ENCODE measurements at regions of chrX and their contacts with region 1.

Region 1: GRCh38 chrX:129606918-129607317 is 47.8 kb downstream of the APLN start:
- H3K4me3 ChIP-seq: no peak overlapping the region
- H3K27ac ChIP-seq: no peak overlapping the region
- H3K4me1 ChIP-seq: no peaks in the 10 kb centered on the region
- CTCF ChIP-seq: peak; percentile 76

Region 2: GRCh38 chrX:129637217-129638109 is 30.5 kb after region 1 on chrX:
- CTCF ChIA-PET with region 1: interaction called, 32 read pairs
- POLR2A ChIA-PET with region 1: no interaction called
- H3K4me3 ChIP-seq: no peak overlapping the region
- H3K27ac ChIP-seq: no peak overlapping the region
- H3K4me1 ChIP-seq: no peaks in the 10 kb centered on the region
- CTCF ChIP-seq: peak; percentile 71

Region 3: GRCh38 chrX:129701624-129702069 is 94.7 kb after region 1 on chrX:
- CTCF ChIA-PET with region 1: interaction called, 13 read pairs
- POLR2A ChIA-PET with region 1: no interaction called
- H3K4me3 ChIP-seq: no peak overlapping the region
- H3K27ac ChIP-seq: no peak overlapping the region
- H3K4me1 ChIP-seq: no peaks in the 10 kb centered on the region
- CTCF ChIP-seq: no peak

Region 4: GRCh38 chrX:129726307-129727111 is 119.6 kb after region 1 on chrX:
- CTCF ChIA-PET with region 1: interaction called, 59 read pairs
- POLR2A ChIA-PET with region 1: no interaction called
- H3K4me3 ChIP-seq: no peak overlapping the region
- H3K27ac ChIP-seq: no peak overlapping the region
- H3K4me1 ChIP-seq: no peaks in the 10 kb centered on the region
- CTCF ChIP-seq: peak; percentile 83

Region 5: GRCh38 chrX:129823115-129823514 is 216.2 kb after region 1 on chrX:
- CTCF ChIA-PET with region 1: interaction called, 13 read pairs
- POLR2A ChIA-PET with region 1: no interaction called
- H3K4me3 ChIP-seq: no peak overlapping the region
- H3K27ac ChIP-seq: no peak overlapping the region
- H3K4me1 ChIP-seq: no peaks in the 10 kb centered on the region
- CTCF ChIP-seq: 0 out of 2 replicates have a peak, but pooled peaks have one; percentile 24

Region 6: GRCh38 chrX:130060122-130061069 is 453.5 kb after region 1 on chrX:
- CTCF ChIA-PET with region 1: interaction called, 11 read pairs
- POLR2A ChIA-PET with region 1: interaction called, 3 read pairs
- H3K4me3 ChIP-seq: peak overlapping the region; percentile 43
- H3K27ac ChIP-seq: peak overlapping the region; percentile 32; the same call in 1 of the 2 replicates
- H3K4me1 ChIP-seq: no peaks in the 10 kb centered on the region
- CTCF ChIP-seq: peak; percentile 93

Measured in HEK293 (cell line).